HEK293 (cell line): ENCODE measurements at regions of chr16 and their contacts with region 1.

Region 1: DNA sequence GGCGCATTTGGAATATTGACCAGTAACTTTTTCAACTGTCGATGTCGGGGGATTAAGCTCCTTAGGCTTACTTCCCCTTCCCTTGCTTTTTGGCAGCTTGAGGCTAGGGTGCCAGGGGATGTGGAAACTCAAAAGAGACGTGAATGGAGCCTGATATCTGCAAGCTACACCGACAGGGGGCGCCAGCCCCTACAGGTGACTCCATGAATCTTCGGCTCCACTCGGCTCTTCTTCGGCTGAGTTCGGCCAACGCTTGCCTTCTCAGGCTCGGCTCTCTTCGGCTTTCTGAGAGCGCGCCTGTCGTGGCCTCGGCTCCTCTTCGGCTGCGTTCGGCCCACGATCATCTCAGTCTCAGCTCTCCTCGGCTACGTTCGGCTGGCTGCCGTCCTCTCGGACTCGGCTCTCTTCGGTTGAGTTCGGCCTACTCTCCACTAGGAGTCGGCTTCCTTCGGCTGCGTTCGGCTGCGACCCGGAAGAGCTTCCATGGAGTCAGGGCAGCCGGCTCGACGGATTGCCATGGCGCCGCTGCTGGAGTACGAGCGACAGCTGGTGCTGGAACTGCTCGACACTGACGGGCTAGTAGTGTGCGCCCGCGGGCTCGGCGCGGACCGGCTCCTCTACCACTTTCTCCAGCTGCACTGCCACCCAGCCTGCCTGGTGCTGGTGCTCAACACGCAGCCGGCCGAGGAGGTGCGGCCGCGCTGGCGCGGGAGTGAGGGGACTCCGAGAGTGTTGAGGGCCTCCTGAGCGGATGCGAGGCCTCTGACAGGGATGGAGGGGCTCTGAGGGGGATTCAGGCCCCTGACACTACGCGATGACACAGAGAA is at the start of gene ERCC4:
- H3K4me3 ChIP-seq: peak within 1 kb of the TSS; percentile 75
- H3K27ac ChIP-seq: peak within 1 kb of the TSS; percentile 42; the same call in 1 of the 2 replicates
- H3K4me1 ChIP-seq: peaks cover 4% of the 10 kb centered on the region
- CTCF ChIP-seq: peak; percentile 92

Region 2: DNA sequence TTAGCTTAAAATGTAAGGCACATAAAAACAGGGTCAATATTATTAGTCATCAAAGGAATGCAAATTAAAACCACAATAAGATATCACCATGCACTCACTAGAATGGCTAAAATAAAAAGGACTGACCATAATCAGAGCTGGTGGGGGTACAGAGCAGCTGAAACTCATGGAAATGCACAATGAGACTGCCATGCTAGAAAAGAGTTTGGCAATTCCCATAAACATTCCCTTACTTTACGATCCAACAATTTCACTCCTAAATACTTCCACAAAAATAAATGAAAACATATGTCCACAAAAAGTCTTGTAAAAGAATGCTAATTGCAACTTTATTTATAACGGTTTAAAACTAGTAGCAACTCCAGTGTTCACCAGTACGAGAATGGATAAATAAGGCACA is 36.0 kb before region 1 on chr16:
- CTCF ChIA-PET with region 1: interaction called, 10 read pairs
- POLR2A ChIA-PET with region 1: no interaction called
- H3K4me3 ChIP-seq: no peak overlapping the region
- H3K27ac ChIP-seq: no peak overlapping the region
- H3K4me1 ChIP-seq: no peaks in the 10 kb centered on the region
- CTCF ChIP-seq: no peak

Region 3: DNA sequence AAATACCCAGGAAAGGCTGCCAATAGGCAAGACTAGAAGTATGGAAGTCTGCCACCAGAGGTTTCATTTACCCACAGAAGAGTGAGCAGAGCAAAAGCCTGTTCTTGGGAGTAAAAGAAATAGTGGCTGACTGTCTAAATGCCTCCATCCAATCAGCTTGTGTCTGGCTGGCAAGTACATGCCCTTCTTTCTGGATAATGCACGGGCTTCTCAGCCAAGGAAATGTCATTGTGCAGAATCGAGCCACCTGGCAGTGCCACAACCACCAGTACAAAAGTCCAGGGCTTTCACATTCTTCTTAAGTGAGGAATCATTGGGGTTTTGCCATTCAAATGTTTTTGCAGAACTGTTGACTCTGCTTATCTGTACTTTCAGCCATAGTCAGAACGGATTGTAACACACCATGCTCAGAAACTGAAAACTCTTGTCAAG is 10.0 kb before region 1 on chr16:
- CTCF ChIA-PET with region 1: interaction called, 33 read pairs
- POLR2A ChIA-PET with region 1: no interaction called
- H3K4me3 ChIP-seq: no peak overlapping the region
- H3K27ac ChIP-seq: no peak overlapping the region
- H3K4me1 ChIP-seq: no peaks in the 10 kb centered on the region
- CTCF ChIP-seq: no peak

Region 4: DNA sequence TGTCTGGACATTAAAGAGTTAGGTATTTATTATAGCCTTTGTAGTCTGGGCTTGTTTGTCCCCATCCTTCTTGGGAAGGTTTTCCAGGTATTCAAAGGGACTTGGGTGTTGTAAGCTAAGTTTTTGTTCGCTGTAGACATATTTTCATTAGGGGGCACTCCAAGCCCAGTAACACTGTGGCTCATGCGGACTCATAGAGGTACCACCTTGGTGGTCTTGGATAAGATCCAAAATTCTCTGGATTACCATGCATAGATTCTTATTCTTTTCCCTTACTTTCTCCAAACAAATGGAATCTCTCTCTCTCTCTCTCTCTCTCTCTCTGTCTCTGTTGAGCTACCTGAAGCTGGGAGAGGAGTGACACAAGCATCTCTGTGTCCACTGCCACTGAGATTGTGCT is 48.9 kb after region 1 on chr16:
- CTCF ChIA-PET with region 1: interaction called, 14 read pairs
- POLR2A ChIA-PET with region 1: no interaction called
- H3K4me3 ChIP-seq: no peak overlapping the region
- H3K27ac ChIP-seq: no peak overlapping the region
- H3K4me1 ChIP-seq: no peaks in the 10 kb centered on the region
- CTCF ChIP-seq: no peak

Region 5: GRCh38 chr16:14249291-14250032 is 329.6 kb after region 1 on chr16:
- CTCF ChIA-PET with region 1: interaction called, 10 read pairs
- POLR2A ChIA-PET with region 1: no interaction called
- H3K4me3 ChIP-seq: no peak overlapping the region
- H3K27ac ChIP-seq: no peak overlapping the region
- H3K4me1 ChIP-seq: no peaks in the 10 kb centered on the region
- CTCF ChIP-seq: peak; percentile 28; the same call in 1 of the 2 replicates